BJ (cell line): ENCODE measurements at regions of chr7 and their contacts with region 1.

Region 1: DNA sequence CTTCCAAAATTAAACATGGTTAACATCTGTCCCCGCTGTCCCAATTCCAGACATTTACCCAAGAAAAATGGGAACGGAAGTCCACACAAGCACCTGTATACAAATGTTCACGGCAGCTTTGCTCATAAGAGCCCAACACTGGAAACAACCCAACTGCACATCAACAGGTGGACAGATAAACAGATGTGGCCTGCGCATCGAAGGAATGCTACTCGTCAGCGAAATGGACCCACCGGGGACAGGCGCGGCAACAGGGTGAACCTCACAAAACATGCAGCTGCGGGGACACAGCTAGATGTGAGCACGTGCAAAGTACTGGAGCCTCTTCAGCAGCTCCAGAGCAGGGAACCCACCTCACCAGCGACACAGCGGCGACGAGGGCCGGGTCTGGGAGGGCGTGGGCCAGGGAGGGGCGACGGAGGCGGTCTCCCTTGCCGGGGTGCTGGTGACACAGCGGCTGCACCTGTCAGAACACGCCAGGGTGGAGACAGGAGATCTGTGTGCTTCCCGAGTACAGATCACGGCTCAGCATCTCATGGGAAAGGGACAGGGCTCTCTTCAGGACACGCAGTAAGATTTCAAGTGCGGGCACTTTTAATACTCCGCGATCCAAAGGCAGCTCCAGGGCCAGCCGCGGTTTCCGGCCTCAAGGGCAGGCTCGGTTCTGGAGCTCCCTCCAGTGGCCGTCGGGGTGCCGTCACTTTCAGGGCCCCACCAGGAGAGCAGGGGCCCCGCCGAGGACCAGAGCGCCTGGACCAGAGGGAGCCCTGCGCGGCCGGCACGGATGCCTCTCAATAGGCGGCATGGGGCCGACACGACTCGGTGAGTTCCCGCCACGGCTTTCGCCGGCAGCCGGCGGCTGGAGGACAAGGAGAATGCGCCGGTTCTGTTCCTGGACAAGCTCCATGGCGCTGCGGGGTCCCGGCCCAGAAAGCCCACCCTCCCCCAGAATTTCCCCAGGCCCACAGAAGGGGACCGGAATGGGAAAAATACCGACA is 21.2 kb downstream of the GPR146 start:
- DNase-seq: no peak
- H3K4me3 ChIP-seq: no peak overlapping the region
- H3K27me3 ChIP-seq: no peaks in the 10 kb centered on the region
- CTCF ChIP-seq: peak; percentile 94

Region 2: DNA sequence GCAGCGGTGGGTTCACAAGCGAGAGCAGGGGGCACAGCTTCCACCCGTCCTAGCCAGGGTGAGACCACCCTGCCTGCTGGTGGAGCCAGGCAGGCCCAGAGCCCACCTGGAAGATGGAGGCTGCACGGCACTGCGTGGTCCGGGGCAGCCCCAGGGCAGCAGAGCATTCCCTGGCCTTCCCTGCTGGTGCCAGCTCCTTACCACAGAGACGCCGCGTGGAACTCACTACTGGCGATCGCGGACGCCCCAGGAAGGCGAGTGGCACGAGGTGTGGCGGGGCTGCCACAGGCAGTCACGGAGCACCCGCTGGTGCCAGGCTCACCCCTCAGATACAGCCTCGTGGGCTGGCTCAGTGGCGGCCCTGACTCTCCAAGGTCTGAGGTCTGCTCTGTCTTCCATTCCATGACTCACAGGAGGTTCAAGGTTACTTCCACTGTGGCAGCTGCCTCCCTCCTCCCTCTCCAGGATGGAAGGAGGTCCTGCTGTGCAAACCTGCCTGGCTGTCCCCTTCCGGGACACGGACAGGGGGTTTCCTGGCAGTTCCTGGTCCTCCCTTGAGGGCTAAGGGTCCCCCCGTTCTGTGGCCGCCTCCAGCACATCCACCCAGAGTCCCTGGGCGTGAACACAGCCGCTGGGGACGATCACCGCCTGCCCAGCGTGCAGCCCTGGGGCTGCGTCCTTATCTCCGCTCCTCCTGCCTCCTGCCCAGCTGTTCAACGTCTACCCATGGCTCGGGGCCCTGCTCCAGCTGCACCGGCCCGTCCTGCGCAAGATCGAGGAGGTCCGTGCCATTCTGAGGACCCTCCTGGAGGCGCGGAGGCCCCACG is 79.4 kb before region 1 on chr7:
- CTCF ChIA-PET with region 1: interaction called, 367 read pairs
- POLR2A ChIA-PET with region 1: no interaction called
- DNase-seq: no peak
- H3K4me3 ChIP-seq: no peak overlapping the region
- H3K27me3 ChIP-seq: 0 out of 2 replicates have a peak, but pooled peaks cover 2% of the 10 kb centered on the region
- CTCF ChIP-seq: no peak

Region 3: GRCh38 chr7:1044191-1045068 is 21.1 kb before region 1 on chr7 and contains the start of gene GPR146:
- CTCF ChIA-PET with region 1: interaction called, 13 read pairs
- POLR2A ChIA-PET with region 1: no interaction called
- DNase-seq: peak; percentile 73
- H3K4me3 ChIP-seq: peak within 1 kb of the TSS; percentile 65
- H3K27me3 ChIP-seq: no peaks in the 10 kb centered on the region
- CTCF ChIP-seq: peak; percentile 80
- polyA plus RNA-seq, gene GPR146: 2.8 and 4.5 TPM in 2 replicates

Region 4: GRCh38 chr7:1076181-1077072 is 10.9 kb after region 1 on chr7:
- CTCF ChIA-PET with region 1: interaction called, 38 read pairs
- POLR2A ChIA-PET with region 1: no interaction called
- DNase-seq: no peak
- H3K4me3 ChIP-seq: no peak overlapping the region
- H3K27me3 ChIP-seq: no peaks in the 10 kb centered on the region
- CTCF ChIP-seq: no peak

Region 5: GRCh38 chr7:1175967-1176851 is 110.6 kb after region 1 on chr7:
- CTCF ChIA-PET with region 1: interaction called, 18 read pairs
- POLR2A ChIA-PET with region 1: no interaction called
- DNase-seq: no peak
- H3K4me3 ChIP-seq: peak overlapping the region; percentile 25
- H3K27me3 ChIP-seq: 0 out of 2 replicates have a peak, but pooled peaks cover 1% of the 10 kb centered on the region
- CTCF ChIP-seq: peak; percentile 95